Heart right ventricle (tissue), 16 donors: ENCODE measurements at regions of chr3 and their contacts with region 1.

Region 1: GRCh38 chr3:128617557-128618397 is 32.8 kb downstream of the RPN1 start:
- DNase-seq: peak; percentile 97 to 99
- ATAC-seq: peak; percentile 94 to 99 (median 98)
- H3K4me3 ChIP-seq: peak overlapping the region; percentile 63 to 95 (median 80)
- H3K27ac ChIP-seq: peak overlapping the region; percentile 41 to 90 (median 84)
- H3K4me1 ChIP-seq: peaks cover 10 to 33% (median 22%) of the 10 kb centered on the region in 9 donors
- H3K27me3 ChIP-seq: no peaks in the 10 kb centered on the region
- CTCF ChIP-seq: peak; percentile 87 to 99 (median 98)

Region 2: DNA sequence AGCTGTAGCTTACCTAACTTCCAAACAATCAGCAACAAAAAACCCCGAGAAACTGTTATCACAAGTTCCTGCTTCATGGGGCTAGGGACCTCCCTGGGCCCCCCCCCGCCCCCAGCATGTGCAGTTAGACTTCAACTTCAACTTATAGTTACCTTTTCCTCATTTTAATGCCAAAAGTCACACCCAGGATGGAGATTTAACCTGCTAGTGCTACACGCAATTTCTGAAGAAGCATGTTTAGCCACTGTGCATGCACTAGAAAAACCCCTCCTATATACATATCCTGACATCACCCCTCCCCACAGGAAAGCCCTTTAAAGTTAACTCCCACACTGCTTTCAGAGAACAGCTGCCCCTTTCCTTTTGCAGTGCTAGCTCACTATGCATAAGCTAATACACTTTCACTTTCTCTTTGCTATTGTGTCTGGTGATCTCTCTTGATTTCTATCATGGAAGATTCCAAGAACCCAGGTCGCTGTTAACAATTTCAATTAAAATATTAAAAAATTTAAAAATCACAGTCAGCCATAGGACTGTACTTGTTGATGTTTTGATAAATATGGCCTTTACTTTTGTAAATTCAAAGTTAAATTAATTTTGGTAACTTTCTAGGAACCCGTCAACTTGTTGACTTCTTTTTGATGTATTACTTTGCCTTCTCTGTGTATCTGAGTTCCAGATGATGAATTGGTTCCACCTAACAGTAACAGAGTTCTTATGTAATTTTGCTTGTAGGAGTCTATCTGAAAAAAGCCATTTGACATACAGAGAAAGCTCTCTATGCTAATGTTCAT is 186.4 kb after region 1 on chr3:
- intact Hi-C with region 1: loop called in 3 of 10 experiments (anchors 5 kb)
- DNase-seq: no peak
- ATAC-seq: peak in 7 of 8 donors; percentile 30 to 64 (median 51)
- H3K4me3 ChIP-seq: peak overlapping the region in 8 of 10 donors; percentile 10 to 44 (median 24)
- H3K27ac ChIP-seq: peak overlapping the region in 9 of 10 donors; percentile 32 to 88 (median 81)
- H3K4me1 ChIP-seq: peaks cover 4 to 94% (median 80%) of the 10 kb centered on the region in 9 donors
- H3K27me3 ChIP-seq: no peaks in the 10 kb centered on the region
- CTCF ChIP-seq: no peak

Region 3: GRCh38 chr3:128917291-128917690 is 299.5 kb after region 1 on chr3:
- intact Hi-C with region 1: loop called in 2 of 10 experiments (anchors 2 kb)
- DNase-seq: no peak
- ATAC-seq: no peak
- H3K4me3 ChIP-seq: no peak overlapping the region
- H3K27ac ChIP-seq: no peak overlapping the region
- H3K4me1 ChIP-seq: peaks cover 0 to 4% (median 0%) of the 10 kb centered on the region in 9 donors
- H3K27me3 ChIP-seq: no peaks in the 10 kb centered on the region
- CTCF ChIP-seq: peak in 7 of 9 donors; percentile 14 to 54 (median 39)